ENCODE measurements at regions of chr11 and their contacts with region 1.

Region 1: DNA sequence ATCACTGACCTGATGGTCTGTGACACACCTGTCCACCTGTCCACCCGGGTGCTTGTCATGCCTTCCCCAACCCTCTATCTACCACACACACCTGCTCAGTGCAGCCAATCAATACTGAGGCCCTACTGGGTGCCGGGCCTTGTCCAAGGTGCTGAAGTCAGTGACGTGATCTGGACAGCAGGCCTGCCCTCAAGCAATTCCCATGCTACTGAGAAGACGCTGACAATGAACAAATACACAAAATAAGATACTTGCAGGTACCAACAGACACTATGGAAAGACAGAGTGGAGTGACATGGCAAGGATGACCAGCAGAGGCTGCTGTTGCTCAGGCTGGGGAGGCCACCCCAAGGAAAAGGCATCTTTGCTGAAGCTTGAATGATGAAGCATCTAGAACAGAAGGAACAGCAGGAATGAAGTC is 21.2 kb downstream of the PLAAT3 start:
- DNase-seq: peak in 1 of 2 experiments; percentile 68
- H3K4me3 ChIP-seq: no peak overlapping the region
- H3K27ac ChIP-seq: no peak overlapping the region
- H3K4me1 ChIP-seq: no peaks in the 10 kb centered on the region
- H3K27me3 ChIP-seq: no peaks in the 10 kb centered on the region
- CTCF ChIP-seq: peak; percentile 63 to 91 (median 75)
- EP300 ChIP-seq: no peak
- POLR2A ChIP-seq: no peak
- RAD21 ChIP-seq: peak; percentile 78 to 82

Region 2: GRCh38 chr11:63551091-63551888 is 41.7 kb before region 1 on chr11:
- CTCF ChIA-PET with region 1: no interaction called
- POLR2A ChIA-PET with region 1: no interaction called
- DNase-seq: no peak
- H3K4me3 ChIP-seq: no peak overlapping the region
- H3K27ac ChIP-seq: no peak overlapping the region
- H3K4me1 ChIP-seq: peaks cover 0 to 6% (median 2%) of the 10 kb centered on the region in 4 experiments; a peak in 1 of 7 replicates
- H3K27me3 ChIP-seq: no peaks in the 10 kb centered on the region
- CTCF ChIP-seq: no peak
- EP300 ChIP-seq: no peak
- POLR2A ChIP-seq: no peak
- RAD21 ChIP-seq: no peak

Region 3: GRCh38 chr11:63567044-63567840 is 25.7 kb before region 1 on chr11:
- CTCF ChIA-PET with region 1: no interaction called
- POLR2A ChIA-PET with region 1: no interaction called
- DNase-seq: no peak
- H3K4me3 ChIP-seq: no peak overlapping the region
- H3K27ac ChIP-seq: peak overlapping the region; percentile 19; the same call in 1 of the 2 replicates
- H3K4me1 ChIP-seq: peaks cover 0 to 5% (median 3%) of the 10 kb centered on the region in 4 experiments; a peak in 3 of 7 replicates
- H3K27me3 ChIP-seq: no peaks in the 10 kb centered on the region
- CTCF ChIP-seq: no peak
- EP300 ChIP-seq: peak in 1 of 2 experiments; percentile 75; a peak in 1 of 3 replicates
- POLR2A ChIP-seq: no peak
- RAD21 ChIP-seq: no peak

Region 4: DNA sequence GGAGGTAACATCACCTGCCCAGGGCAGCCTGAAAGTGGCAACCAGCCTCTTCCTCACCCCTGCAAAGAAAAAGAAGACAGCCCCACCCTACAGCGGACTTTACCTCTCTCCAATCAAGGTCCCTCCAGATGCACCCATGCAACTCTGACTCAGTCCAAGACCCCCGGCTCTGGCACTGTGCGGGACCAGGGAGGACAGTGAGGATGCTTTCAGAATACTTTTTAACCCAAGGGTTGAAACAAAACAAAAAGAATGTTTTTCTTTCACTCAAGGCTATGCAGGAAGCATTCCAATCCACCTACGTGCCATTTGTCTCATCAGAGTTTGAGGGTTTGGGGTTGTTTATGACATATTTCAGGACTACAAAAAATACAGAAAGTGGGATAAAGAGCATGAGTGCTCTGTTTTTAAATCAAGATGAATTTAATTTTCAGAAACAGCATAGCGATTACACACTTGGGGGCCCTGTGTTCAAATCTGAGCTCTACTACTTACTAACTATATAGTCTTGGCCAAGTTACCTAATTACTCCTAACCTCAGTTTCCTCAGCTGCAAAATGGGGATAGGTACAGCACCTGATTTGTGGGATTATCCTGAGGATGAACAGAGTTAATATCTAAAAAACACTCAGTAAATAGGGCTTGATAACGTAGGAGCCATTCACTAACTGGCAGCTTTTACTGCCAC is 15.5 kb after region 1 on chr11:
- CTCF ChIA-PET with region 1: interaction called, 15 read pairs
- POLR2A ChIA-PET with region 1: interaction called, 4 read pairs
- DNase-seq: no peak
- H3K4me3 ChIP-seq: no peak overlapping the region
- H3K27ac ChIP-seq: no peak overlapping the region
- H3K4me1 ChIP-seq: peaks cover 12 to 31% (median 15%) of the 10 kb centered on the region in 4 experiments
- H3K27me3 ChIP-seq: no peaks in the 10 kb centered on the region
- CTCF ChIP-seq: no peak
- EP300 ChIP-seq: no peak
- POLR2A ChIP-seq: no peak
- RAD21 ChIP-seq: no peak

Region 5: DNA sequence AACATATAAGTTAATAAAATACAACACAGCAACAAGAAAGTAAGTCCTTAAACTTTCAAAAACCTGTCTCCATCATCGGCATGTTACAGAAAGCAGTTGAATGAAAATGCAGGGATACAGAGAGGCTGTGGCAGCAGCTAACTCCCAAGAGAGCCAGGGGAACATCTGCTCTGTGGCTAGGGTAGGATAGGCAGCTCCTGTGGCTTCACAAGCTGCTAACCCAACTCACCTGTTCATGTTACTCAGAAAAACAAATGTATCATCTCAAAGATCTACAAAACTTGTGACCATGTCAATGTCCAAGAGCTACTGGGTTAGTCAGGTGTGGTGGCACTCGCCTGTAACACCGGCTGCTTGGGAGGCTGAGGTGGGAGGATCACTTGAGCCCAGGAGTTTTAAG is 36.4 kb after region 1 on chr11:
- CTCF ChIA-PET with region 1: interaction called, 10 read pairs
- POLR2A ChIA-PET with region 1: no interaction called
- DNase-seq: no peak
- H3K4me3 ChIP-seq: no peak overlapping the region
- H3K27ac ChIP-seq: no peak overlapping the region
- H3K4me1 ChIP-seq: no peaks in the 10 kb centered on the region
- H3K27me3 ChIP-seq: no peaks in the 10 kb centered on the region
- CTCF ChIP-seq: no peak
- EP300 ChIP-seq: no peak
- POLR2A ChIP-seq: no peak
- RAD21 ChIP-seq: no peak